ENCODE measurements at regions of chr17 and their contacts with region 1.

Region 1: DNA sequence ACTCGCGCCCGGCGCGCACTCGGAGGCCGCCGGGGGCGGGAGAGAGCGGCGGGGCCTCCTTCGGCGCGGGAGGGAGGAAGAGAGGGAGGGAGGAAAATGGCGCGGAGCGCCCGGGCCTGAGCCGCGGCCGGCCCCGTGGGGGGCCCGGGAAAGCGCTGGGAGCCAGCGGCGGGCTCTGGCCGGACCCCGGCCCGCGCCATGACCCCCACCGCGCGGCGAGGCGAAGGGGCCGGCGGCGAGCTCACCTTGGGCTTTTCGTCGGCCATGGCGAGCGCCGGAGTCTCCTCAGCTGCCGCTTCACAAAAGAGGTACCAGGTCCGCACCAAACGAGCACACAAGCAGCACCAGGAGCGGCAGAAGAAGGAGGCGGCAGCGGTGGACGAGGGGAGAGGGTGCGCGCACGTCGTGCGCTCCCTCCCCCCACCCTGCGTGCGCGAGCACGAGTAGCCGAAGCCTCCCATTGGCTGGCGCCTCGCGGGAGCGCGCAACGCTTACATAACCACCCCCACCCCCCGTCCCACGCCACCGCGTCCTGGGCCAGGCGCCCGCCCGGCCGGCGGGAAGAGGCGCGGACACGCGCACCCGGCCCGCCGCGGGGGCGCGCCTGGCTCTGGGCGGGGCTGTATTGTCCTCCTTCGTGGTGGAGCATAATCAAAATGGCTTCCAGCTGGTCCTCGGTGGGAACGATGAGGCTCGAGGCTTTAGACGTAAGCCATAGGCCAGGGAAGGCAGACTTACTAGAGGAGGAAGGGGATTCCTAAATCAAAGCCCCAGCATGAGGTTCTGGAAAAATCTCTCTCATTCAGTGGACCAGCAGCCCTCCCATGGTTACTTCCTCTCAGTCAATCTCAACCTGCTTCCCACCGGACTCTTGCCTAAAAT is at the start of gene SUMO2:
- DNase-seq: peak; percentile 99
- CTCF ChIP-seq: no peak

Region 2: DNA sequence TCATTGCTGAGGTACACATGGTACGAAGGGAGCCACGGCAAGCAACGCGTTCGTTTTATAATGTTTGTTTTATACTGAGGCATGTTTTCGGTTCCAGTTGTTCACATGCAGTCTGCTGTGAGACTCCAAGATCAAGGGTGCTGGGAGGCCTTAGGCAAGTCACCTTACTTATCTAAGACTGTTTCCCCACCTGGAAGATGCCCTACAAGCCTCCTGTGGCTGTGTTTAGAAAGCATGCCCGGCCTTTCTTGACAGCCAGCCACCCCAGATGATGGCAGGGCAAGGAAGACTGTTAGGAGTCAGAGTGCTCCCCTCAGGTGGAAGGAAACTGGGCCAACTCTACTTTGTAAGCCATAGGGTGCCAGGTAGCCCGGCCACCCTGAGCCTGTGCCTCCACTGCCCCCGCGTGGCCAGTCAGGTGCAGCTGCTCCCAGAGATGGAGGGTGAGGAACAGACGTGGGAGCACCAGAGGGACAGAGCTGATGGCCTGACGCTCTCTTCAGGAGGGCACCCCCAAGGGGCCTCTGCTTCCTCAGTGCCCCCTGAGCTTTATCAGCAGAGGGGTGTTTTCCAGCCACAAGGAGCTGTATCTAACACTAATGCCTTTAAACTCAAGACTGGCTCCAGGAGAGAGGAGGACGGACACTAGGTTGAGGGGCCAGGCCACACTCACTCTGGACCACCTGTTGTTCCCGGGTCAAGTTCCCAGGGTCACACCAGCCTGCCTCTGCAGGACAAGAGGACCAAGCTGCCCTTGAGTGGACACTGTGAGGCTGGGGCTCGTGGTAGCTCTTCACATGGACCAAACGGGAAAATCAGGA is 412.1 kb before region 1 on chr17:
- in situ Hi-C with region 1: loop called (anchors 25 kb)
- DNase-seq: peak; percentile 74
- CTCF ChIP-seq: peak; percentile 89

Measured in GM13977 (cell line).